Panc1 (cell line): ENCODE measurements at regions of chr17 and their contacts with region 1.

Region 1: DNA sequence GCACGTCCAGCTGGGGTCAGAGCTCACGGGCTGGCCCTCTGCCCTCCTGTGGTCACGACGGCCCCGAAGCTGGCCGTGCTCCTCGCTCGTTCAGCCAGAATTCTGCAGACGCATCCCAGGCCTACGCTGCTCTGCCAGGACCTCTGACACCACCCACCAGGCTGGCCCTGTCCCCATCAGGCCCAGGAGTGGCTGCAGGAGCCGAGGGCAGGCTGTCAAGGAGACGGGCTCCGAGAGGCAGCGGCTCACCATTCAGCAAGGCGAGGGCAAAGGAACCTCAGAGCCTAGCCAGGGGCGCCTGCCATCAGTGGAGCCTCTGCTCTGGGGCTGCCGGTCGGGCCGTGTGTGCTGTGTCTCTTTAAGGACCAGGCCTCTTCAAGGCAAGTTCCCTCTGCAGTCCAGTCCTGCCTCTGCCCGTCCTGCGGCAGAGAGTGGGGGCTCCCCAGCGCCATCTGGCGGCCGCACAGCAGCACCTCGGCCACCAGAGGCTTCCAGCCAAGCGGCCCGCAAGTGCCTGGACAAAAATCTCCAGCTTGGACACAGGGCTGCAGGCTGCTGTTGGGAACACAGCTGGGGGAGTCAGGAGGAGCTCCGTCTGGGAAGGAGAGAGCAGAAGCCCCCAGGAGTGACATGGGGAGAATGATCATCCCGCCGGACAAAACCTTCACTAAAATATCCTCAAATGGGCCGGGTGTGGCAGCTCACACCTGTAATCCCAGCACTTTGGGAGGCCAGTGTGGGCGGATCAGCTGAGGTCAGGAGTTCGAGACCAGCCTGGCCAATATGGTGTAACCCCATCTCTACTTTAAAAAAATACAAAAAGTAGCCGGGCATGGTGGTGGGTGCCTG is 7.4 kb upstream of the ABR start:
- DNase-seq: peak; percentile 42
- ATAC-seq: peak; percentile 96
- H3K4me3 ChIP-seq: no peak overlapping the region
- H3K27ac ChIP-seq: no peak overlapping the region
- H3K4me1 ChIP-seq: peaks cover 14% of the 10 kb centered on the region
- H3K27me3 ChIP-seq: no peaks in the 10 kb centered on the region
- CTCF ChIP-seq: peak; percentile 98

Region 2: DNA sequence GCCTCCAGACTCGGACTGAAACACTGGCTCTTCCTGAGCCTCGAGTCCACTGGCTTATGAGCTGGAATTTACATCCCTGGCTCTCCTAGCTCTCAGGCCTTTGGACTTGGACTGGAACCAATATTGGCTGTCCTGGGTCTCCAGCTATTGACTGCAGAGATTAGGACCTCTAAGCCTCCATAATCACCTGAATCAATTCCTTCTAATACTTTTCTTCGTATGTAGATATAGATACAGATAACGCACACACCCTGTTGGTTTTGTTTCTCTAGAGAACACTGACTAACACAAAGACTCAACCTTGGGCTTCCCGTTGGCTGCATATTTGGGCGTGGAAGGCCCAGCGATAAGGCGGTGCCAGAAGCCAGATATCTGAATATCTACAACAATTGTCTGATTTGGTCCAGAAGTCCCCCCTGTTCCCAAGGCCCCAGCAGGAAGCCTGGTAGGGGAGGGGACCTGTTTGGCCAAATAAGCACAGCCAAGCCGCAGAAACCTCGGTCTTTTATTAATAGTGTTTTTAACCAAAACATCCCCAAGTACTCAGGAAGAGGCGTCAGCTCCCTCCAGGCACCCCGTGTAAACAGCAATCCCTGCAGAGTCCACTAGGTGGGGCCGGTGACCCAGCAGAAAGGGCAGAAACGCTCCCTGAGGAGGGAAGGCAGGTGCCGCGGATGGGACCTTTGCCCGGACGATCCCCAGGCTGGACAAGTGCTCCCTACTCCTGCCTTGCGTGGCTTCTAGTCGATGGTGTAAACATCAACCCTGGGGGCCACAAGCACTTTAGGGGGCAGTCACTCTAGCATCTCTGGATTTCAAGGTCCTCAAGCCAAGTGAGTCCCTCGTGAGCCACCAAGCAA is 64.4 kb before region 1 on chr17:
- CTCF ChIA-PET with region 1: interaction called, 9 read pairs
- POLR2A ChIA-PET with region 1: no interaction called
- in situ Hi-C with region 1: no loop called
- intact Hi-C with region 1: loop called (anchors 5 kb)
- DNase-seq: no peak
- ATAC-seq: peak; percentile 85
- H3K4me3 ChIP-seq: no peak overlapping the region
- H3K27ac ChIP-seq: peak overlapping the region; percentile 39
- H3K4me1 ChIP-seq: peaks cover 14% of the 10 kb centered on the region
- H3K27me3 ChIP-seq: no peaks in the 10 kb centered on the region
- CTCF ChIP-seq: peak; percentile 95

Region 3: GRCh38 chr17:1294157-1294717 is 107.1 kb after region 1 on chr17:
- CTCF ChIA-PET with region 1: no interaction called
- POLR2A ChIA-PET with region 1: no interaction called
- in situ Hi-C with region 1: no loop called
- intact Hi-C with region 1: no loop called
- DNase-seq: no peak
- ATAC-seq: no peak
- H3K4me3 ChIP-seq: no peak overlapping the region
- H3K27ac ChIP-seq: no peak overlapping the region
- H3K4me1 ChIP-seq: no peaks in the 10 kb centered on the region
- H3K27me3 ChIP-seq: no peaks in the 10 kb centered on the region
- CTCF ChIP-seq: no peak

Region 4: DNA sequence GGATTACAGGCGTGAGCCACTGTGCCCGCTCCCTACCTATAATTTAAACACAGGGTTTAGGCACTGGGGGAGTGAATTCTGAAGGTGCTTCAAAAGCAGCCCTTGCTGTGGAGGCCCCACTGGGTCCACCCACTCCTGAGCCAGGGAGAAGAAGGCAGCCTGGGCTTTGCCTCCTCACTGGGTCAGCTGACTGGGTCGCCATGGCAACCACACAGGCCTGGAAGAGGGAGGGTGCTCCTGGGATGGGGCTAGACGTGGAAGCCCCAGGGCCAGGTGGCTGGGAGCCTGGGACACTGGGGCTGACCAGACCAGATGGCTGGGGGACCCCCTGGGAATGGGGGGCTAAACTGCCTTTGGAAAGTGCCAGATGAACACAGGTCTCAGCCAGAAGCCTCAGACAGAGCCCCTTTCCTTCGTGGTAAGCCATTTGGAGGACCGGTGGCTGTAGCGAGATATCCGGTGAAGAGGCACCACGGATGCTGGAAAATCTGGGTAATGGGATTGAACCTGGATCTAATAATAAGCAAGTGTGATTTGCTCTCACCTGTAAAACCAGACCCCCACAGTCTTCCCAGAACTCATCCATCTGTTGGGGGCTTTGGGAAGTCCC is 125.2 kb after region 1 on chr17:
- CTCF ChIA-PET with region 1: no interaction called
- POLR2A ChIA-PET with region 1: no interaction called
- in situ Hi-C with region 1: no loop called
- intact Hi-C with region 1: no loop called
- DNase-seq: no peak
- ATAC-seq: no peak
- H3K4me3 ChIP-seq: no peak overlapping the region
- H3K27ac ChIP-seq: no peak overlapping the region
- H3K4me1 ChIP-seq: no peaks in the 10 kb centered on the region
- H3K27me3 ChIP-seq: no peaks in the 10 kb centered on the region; the same call in 1 of the 2 replicates
- CTCF ChIP-seq: no peak